Panc1 (cell line): ENCODE measurements at regions of chr20 and their contacts with region 1.

Region 1: DNA sequence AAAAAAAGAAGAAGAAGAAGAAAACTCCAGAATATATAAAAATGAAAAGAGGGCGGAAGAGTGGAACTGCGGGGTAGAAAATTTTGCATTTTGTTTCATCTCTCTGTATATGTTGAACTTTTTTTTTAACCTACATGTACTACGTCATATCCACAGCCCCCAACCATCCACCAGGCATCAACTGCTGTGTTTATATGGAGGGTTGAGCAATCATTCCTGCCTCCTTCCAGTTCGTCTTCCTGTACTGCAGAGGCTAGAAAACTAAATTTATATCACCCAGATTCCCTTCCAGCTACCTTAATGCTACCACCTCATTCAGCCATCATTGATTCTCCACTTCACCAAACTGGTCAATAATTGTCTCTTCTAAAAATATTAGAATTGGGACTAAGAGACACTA is 9.5 kb upstream of the SIGLEC1 start:
- DNase-seq: no peak
- ATAC-seq: no peak
- H3K4me3 ChIP-seq: no peak overlapping the region
- H3K27ac ChIP-seq: no peak overlapping the region
- H3K4me1 ChIP-seq: no peaks in the 10 kb centered on the region
- H3K27me3 ChIP-seq: 0 out of 2 replicates have a peak, but pooled peaks cover 7% of the 10 kb centered on the region
- CTCF ChIP-seq: no peak

Region 2: GRCh38 chr20:3738111-3739053 is 16.5 kb after region 1 on chr20:
- CTCF ChIA-PET with region 1: no interaction called
- POLR2A ChIA-PET with region 1: interaction called, 11 read pairs
- in situ Hi-C with region 1: no loop called
- intact Hi-C with region 1: no loop called
- DNase-seq: no peak
- ATAC-seq: no peak
- H3K4me3 ChIP-seq: no peak overlapping the region
- H3K27ac ChIP-seq: no peak overlapping the region
- H3K4me1 ChIP-seq: peaks cover 6% of the 10 kb centered on the region; the same call in 1 of the 2 replicates
- H3K27me3 ChIP-seq: no peaks in the 10 kb centered on the region
- CTCF ChIP-seq: no peak